ENCODE measurements at regions of chr12 and their contacts with region 1.

Region 1: GRCh38 chr12:127355061-127355841 is 911.7 kb upstream of the TMEM132C start:
- DNase-seq: peak; percentile 39 to 53 (median 49)
- ATAC-seq: peak; percentile 94
- H3K4me3 ChIP-seq: no peak overlapping the region
- H3K27ac ChIP-seq: no peak overlapping the region
- H3K4me1 ChIP-seq: no peaks in the 10 kb centered on the region
- H3K27me3 ChIP-seq: no peaks in the 10 kb centered on the region
- CTCF ChIP-seq: peak; percentile 51 to 74 (median 70)
- EP300 ChIP-seq: no peak
- POLR2A ChIP-seq: no peak
- RAD21 ChIP-seq: peak; percentile 44 to 61

Region 2: GRCh38 chr12:126772171-126772864 is 582.9 kb before region 1 on chr12:
- CTCF ChIA-PET with region 1: no interaction called
- POLR2A ChIA-PET with region 1: no interaction called
- in situ Hi-C with region 1: no loop called
- intact Hi-C with region 1: loop called (anchors 2 kb)
- DNase-seq: peak; percentile 23 to 75 (median 44)
- ATAC-seq: peak; percentile 90
- H3K4me3 ChIP-seq: peak overlapping the region; percentile 32
- H3K27ac ChIP-seq: peak overlapping the region; percentile 50; the same call in 2 of the 3 replicates
- H3K4me1 ChIP-seq: no peaks in the 10 kb centered on the region
- H3K27me3 ChIP-seq: no peaks in the 10 kb centered on the region
- CTCF ChIP-seq: no peak
- EP300 ChIP-seq: no peak
- POLR2A ChIP-seq: 0 out of 2 replicates have a peak, but pooled peaks have one; percentile 37
- RAD21 ChIP-seq: no peak

Measured in K562 (cell line).